CD4-positive, alpha-beta T cell (primary cell): ENCODE measurements at regions of chr13 and their contacts with region 1.

Region 1: DNA sequence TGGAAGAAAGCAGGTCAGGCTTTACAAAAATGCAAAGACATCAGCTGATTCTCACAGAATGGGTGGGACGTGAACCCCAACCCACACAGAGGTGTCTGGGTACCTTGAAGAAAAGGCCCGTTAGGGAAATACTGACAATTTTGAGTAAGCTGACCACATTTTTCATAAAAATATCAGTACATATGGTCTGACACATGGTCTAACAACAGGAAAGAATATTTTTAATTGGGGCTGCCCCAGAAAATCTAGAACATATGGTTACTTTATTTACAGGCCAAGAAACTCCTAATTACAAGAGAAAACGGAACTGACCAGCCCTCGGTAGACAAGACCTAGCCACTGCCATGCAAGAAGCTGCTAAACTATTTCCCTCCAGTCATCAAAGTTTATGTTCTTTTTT is 48.7 kb upstream of the ITM2B start:
- DNase-seq: no peak
- ATAC-seq: no peak
- H3K4me3 ChIP-seq: no peak overlapping the region
- H3K4me3 Mint-ChIP-seq: peak overlapping the region; percentile 43
- H3K27ac ChIP-seq: peak overlapping the region in 1 of 2 donors; percentile 19
- H3K27ac Mint-ChIP-seq: peak overlapping the region; percentile 89
- H3K4me1 ChIP-seq: peaks cover 45% of the 10 kb centered on the region
- H3K4me1 Mint-ChIP-seq: peaks cover 68% of the 10 kb centered on the region
- H3K27me3 ChIP-seq: no peaks in the 10 kb centered on the region
- H3K27me3 Mint-ChIP-seq: no peaks in the 10 kb centered on the region
- CTCF ChIP-seq: no peak

Region 2: GRCh38 chr13:48126944-48127830 is 57.1 kb before region 1 on chr13:
- CTCF ChIA-PET with region 1: interaction called, 7 read pairs
- POLR2A ChIA-PET with region 1: interaction called, 14 read pairs
- intact Hi-C with region 1: loop called (anchors 2 kb)
- DNase-seq: peak; percentile 6 to 84 (median 32)
- ATAC-seq: peak; percentile 93
- H3K4me3 ChIP-seq: no peak overlapping the region
- H3K4me3 Mint-ChIP-seq: peak overlapping the region; percentile 23
- H3K27ac ChIP-seq: peak overlapping the region; percentile 61 to 73
- H3K27ac Mint-ChIP-seq: peak overlapping the region; percentile 91
- H3K4me1 ChIP-seq: peaks cover 11% of the 10 kb centered on the region
- H3K4me1 Mint-ChIP-seq: peaks cover 33% of the 10 kb centered on the region
- H3K27me3 ChIP-seq: no peaks in the 10 kb centered on the region
- H3K27me3 Mint-ChIP-seq: no peaks in the 10 kb centered on the region
- CTCF ChIP-seq: peak; percentile 81

Region 3: DNA sequence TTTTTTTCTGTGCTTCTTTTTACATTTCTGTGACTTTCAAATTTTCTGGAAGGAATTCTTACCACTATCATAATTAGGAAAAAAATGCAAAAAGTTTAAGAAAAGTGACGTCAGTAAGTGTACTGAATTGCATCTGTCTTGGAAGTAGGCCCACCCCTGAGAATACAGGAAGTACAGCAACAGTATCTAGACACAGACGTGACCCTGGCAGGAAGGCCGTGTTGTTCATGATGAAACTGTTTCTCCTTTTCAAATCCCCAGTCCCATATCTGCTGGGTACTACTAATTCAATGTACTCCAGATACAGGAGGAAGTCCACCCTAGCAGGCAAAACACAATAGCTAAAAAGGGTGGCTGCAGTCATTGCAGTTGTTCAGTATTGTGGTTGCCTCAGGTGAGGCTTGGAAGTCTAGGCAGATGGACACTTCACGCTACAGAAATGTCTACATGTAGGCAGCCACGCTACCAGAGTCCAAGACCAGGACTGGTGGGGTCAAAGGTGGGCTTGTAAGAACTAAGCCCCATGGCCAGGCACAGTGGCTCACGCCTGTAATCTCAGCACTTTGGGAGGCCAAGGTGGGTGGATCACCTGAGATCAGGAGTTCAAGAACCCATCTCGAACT is 39.7 kb before region 1 on chr13:
- CTCF ChIA-PET with region 1: no interaction called
- POLR2A ChIA-PET with region 1: no interaction called
- intact Hi-C with region 1: no loop called
- DNase-seq: peak in 4 of 14 experiments; percentile 39 to 64 (median 62)
- ATAC-seq: peak; percentile 32
- H3K4me3 ChIP-seq: no peak overlapping the region
- H3K4me3 Mint-ChIP-seq: no peak overlapping the region
- H3K27ac ChIP-seq: peak overlapping the region; percentile 38 to 57
- H3K27ac Mint-ChIP-seq: peak overlapping the region; percentile 0
- H3K4me1 ChIP-seq: peaks cover 17% of the 10 kb centered on the region
- H3K4me1 Mint-ChIP-seq: peaks cover 32% of the 10 kb centered on the region
- H3K27me3 ChIP-seq: no peaks in the 10 kb centered on the region
- H3K27me3 Mint-ChIP-seq: no peaks in the 10 kb centered on the region
- CTCF ChIP-seq: no peak

Region 4: DNA sequence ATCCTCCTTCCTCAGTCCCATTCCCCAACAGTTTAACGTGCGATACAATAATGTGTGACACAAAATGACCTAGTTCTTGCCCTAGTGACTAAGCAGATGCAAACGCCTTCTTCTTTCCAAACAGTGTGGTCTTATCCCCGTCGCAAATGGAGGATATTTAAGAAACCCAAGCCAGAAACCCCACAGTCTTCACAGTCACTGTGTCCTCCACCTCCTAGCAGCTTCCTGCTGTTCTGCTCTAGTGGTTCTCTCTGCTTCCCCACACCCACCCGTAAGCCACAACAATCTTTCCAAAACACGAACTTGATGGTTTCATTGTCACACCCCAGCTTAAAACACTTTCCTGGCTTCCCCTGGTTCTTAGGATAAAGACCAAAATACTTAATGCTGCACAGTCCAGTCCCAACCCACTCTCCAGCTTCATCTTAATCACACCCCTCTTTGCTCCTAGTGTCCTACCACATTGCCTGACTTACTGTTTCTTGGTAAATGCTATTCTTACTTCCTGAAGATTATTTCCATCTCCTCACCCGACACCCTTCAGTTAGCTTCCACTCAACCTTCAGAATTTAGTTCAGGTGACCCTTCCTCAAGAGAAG is 81.1 kb after region 1 on chr13:
- CTCF ChIA-PET with region 1: no interaction called
- POLR2A ChIA-PET with region 1: no interaction called
- intact Hi-C with region 1: no loop called
- DNase-seq: peak in 2 of 14 experiments; percentile 15
- ATAC-seq: peak; percentile 70
- H3K4me3 ChIP-seq: no peak overlapping the region
- H3K4me3 Mint-ChIP-seq: peak overlapping the region; percentile 39
- H3K27ac ChIP-seq: peak overlapping the region in 1 of 2 donors; percentile 38
- H3K27ac Mint-ChIP-seq: peak overlapping the region; percentile 77
- H3K4me1 ChIP-seq: peaks cover 14% of the 10 kb centered on the region
- H3K4me1 Mint-ChIP-seq: peaks cover 62% of the 10 kb centered on the region
- H3K27me3 ChIP-seq: no peaks in the 10 kb centered on the region
- H3K27me3 Mint-ChIP-seq: no peaks in the 10 kb centered on the region
- CTCF ChIP-seq: no peak

Region 5: DNA sequence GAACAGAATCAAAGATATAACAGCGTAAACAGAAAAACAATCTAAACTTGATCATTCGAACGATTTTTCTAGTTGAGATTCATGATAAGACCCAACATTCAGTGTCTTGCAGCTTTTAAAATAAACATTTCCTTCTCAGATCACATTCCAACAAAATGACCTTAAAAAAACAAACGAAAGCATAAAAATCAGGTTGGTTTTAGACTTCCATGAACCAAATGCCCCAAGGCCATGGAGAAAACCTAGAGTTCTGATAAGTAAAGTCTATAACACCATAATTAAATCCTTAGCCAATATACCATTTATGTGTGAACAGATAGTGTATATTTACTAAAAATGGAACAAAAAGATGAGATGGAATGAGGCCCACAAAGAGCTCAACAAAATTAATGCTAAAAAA is 1204.0 kb after region 1 on chr13:
- CTCF ChIA-PET with region 1: no interaction called
- POLR2A ChIA-PET with region 1: no interaction called
- intact Hi-C with region 1: no loop called
- DNase-seq: no peak
- ATAC-seq: no peak
- H3K4me3 ChIP-seq: no peak overlapping the region
- H3K4me3 Mint-ChIP-seq: no peak overlapping the region
- H3K27ac ChIP-seq: no peak overlapping the region
- H3K27ac Mint-ChIP-seq: no peak overlapping the region
- H3K4me1 ChIP-seq: no peaks in the 10 kb centered on the region
- H3K4me1 Mint-ChIP-seq: no peaks in the 10 kb centered on the region
- H3K27me3 ChIP-seq: no peaks in the 10 kb centered on the region
- H3K27me3 Mint-ChIP-seq: peaks cover 24% of the 10 kb centered on the region
- CTCF ChIP-seq: no peak